Activated CD8-positive, alpha-beta memory T cell treated with anti-CD3 and anti-CD28 coated beads, Interleukin-2, amount 10 ng/mL, durations not matched to agents 7 days and 5 days (primary cell): ENCODE measurements at regions of chr11 and their contacts with region 1.

Region 1: GRCh38 chr11:118295834-118296454 is 8.6 kb upstream of the CD3E start:
- DNase-seq: peak; percentile 58
- ATAC-seq: peak; percentile 83
- H3K4me3 Mint-ChIP-seq: no peak overlapping the region
- H3K27ac Mint-ChIP-seq: no peak overlapping the region
- H3K4me1 Mint-ChIP-seq: peaks cover 18% of the 10 kb centered on the region
- H3K27me3 Mint-ChIP-seq: no peaks in the 10 kb centered on the region

Region 2: DNA sequence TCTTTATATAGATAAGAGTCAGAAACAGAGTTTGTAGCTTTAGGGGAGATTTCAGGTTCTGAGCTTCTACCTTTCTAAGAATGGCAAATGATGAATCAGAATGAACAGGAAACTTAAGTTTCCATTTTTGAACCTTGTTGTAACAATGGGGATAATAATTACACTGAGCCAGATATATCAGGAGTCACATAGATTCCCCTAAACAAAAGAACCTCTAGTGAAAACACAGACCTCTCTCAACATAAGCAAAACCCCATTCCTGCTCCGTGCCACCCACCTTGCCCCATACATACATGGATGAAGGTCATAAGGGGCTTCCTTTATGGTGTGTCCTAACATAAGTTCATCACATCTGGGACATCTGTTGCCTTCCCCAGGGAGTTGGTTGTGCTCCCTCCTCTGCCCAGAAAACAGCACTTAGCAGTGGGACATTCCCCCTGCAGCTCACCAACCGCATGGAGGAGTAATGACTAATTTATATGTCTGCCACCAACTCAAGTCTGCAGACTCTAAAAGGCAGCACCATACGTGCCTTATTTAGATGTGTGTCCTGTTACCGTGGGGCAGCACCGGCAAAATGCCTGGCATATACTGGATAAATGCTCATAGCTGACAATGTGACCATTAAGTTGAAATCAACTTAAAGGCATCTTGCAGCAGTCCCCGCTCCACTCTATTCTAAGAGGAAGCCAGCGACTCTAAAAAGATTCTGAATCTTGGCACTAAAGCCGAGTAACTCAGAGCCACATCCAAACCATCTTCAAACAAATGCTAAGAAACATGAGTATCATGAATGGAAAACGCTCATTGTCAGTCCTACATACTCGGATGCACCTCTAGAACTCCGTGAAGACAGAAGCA is 79.1 kb before region 1 on chr11:
- CTCF ChIA-PET with region 1: interaction called, 16 read pairs
- DNase-seq: peak; percentile 75
- ATAC-seq: peak; percentile 67
- H3K4me3 Mint-ChIP-seq: peak overlapping the region; percentile 79
- H3K27ac Mint-ChIP-seq: peak overlapping the region; percentile 98
- H3K4me1 Mint-ChIP-seq: peaks cover 97% of the 10 kb centered on the region
- H3K27me3 Mint-ChIP-seq: no peaks in the 10 kb centered on the region

Region 3: DNA sequence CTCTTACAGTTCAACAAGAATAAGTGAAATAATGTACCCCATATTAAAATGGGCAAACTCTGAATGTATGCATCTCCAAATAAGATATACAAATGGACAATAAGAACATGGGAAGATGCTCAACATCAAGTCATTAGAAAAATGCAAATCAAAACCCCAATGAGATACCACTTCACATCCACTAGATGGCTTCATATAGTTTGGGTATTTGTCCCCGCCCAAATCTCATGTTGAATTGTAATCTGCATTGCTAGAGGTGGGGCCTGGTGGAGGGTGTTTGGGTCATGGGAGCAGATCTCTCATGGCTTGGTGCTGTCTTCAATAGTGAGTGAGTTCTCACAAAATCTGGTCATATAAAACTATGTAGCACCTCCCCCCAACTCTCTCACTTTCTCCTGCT is 37.5 kb before region 1 on chr11:
- CTCF ChIA-PET with region 1: interaction called, 18 read pairs
- DNase-seq: no peak
- ATAC-seq: no peak
- H3K4me3 Mint-ChIP-seq: no peak overlapping the region
- H3K27ac Mint-ChIP-seq: no peak overlapping the region
- H3K4me1 Mint-ChIP-seq: peaks cover 38% of the 10 kb centered on the region
- H3K27me3 Mint-ChIP-seq: no peaks in the 10 kb centered on the region

Region 4: GRCh38 chr11:118263695-118264567 is 32.0 kb before region 1 on chr11 and contains the start of gene MPZL2:
- CTCF ChIA-PET with region 1: interaction called, 18 read pairs
- DNase-seq: peak; percentile 46
- ATAC-seq: peak; percentile 53
- H3K4me3 Mint-ChIP-seq: peak within 1 kb of the TSS; percentile 69
- H3K27ac Mint-ChIP-seq: peak within 1 kb of the TSS; percentile 2
- H3K4me1 Mint-ChIP-seq: peaks cover 46% of the 10 kb centered on the region
- H3K27me3 Mint-ChIP-seq: peaks cover 16% of the 10 kb centered on the region
- total RNA-seq, gene MPZL2: 3.0 to 3.2 TPM

Region 5: GRCh38 chr11:118277306-118277705 is 18.6 kb before region 1 on chr11:
- CTCF ChIA-PET with region 1: interaction called, 36 read pairs
- DNase-seq: peak; percentile 55
- ATAC-seq: peak; percentile 69
- H3K4me3 Mint-ChIP-seq: no peak overlapping the region
- H3K27ac Mint-ChIP-seq: no peak overlapping the region
- H3K4me1 Mint-ChIP-seq: peaks cover 36% of the 10 kb centered on the region
- H3K27me3 Mint-ChIP-seq: no peaks in the 10 kb centered on the region

Region 6: DNA sequence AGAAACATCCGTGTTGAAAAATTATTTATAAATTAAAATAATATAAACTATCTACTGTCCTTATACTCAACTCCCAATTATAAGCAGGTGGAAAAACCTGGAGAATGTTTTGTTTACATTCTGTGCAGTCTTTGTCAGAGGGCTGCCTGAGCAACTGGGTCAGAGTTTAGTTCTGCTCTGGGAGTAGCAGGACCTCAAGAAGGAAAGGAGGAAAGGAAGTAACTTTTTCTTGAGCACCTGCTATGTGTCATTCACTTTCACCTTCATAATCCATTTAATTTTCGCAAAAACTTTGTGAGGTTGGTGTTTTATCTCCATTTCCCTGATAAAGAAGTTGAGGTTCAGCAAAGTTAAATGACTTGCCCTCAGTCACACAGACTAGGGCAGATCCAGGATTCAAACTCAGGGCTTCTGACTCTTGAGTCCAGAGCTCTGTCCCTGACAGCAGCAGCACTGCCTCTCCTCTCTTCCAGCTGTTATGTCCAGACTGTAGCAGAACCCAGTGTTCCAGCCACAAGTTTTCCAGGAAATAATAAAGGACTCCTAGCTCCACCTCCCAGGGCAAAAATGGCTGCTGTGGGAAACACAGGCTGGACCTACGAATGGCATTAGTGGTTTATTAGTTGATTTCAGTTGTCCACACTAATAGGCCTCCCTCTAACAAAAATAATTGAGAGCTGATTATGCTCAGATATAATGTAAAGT is 15.0 kb after region 1 on chr11:
- CTCF ChIA-PET with region 1: interaction called, 32 read pairs
- DNase-seq: no peak
- ATAC-seq: no peak
- H3K4me3 Mint-ChIP-seq: no peak overlapping the region
- H3K27ac Mint-ChIP-seq: peak overlapping the region; percentile 27
- H3K4me1 Mint-ChIP-seq: peaks cover 84% of the 10 kb centered on the region
- H3K27me3 Mint-ChIP-seq: no peaks in the 10 kb centered on the region